PC-9 (cell line): ENCODE measurements at regions of chr12 and their contacts with region 1.

Region 1: DNA sequence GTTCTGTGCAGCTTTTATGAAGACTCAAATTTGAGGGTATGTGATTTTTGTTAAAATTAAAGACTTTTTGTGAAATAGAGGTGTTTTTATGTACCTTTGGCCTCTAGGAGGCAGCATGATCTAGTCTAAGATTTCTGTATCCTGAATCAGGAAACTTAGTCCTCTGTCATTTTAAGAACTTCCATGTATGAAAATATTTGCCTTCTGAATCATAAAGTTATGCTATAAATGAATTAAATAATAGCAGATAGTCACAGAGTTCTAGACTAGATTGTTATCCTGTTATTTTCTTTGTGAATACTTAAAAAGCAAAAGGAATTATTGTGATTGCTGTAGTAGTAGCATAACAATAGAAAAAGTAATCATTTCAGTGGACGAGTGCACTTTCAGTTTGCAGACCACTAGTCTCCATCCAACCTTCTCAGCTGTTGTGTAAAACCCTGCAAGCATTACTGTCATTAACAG is 56.3 kb downstream of the FGD4 start:
- DNase-seq: peak; percentile 22 to 69
- H3K4me3 ChIP-seq: no peak overlapping the region
- H3K27ac ChIP-seq: no peak overlapping the region
- H3K4me1 ChIP-seq: peaks cover 34% of the 10 kb centered on the region
- H3K27me3 ChIP-seq: no peaks in the 10 kb centered on the region
- CTCF ChIP-seq: peak; percentile 83

Region 2: GRCh38 chr12:32437095-32437515 is 18.5 kb before region 1 on chr12:
- CTCF ChIA-PET with region 1: interaction called, 3 read pairs
- POLR2A ChIA-PET with region 1: no interaction called
- intact Hi-C with region 1: loop called (anchors 1 kb)
- DNase-seq: peak; percentile 76 to 97
- H3K4me3 ChIP-seq: peak overlapping the region; percentile 28; the same call in 1 of the 2 replicates
- H3K27ac ChIP-seq: peak overlapping the region; percentile 81
- H3K4me1 ChIP-seq: peaks cover 41% of the 10 kb centered on the region
- H3K27me3 ChIP-seq: no peaks in the 10 kb centered on the region
- CTCF ChIP-seq: no peak

Region 3: GRCh38 chr12:32444895-32445294 is 10.7 kb before region 1 on chr12:
- CTCF ChIA-PET with region 1: no interaction called
- POLR2A ChIA-PET with region 1: no interaction called
- intact Hi-C with region 1: loop called (anchors 1 kb)
- DNase-seq: peak; percentile 73 to 91
- H3K4me3 ChIP-seq: no peak overlapping the region
- H3K27ac ChIP-seq: peak overlapping the region; percentile 57
- H3K4me1 ChIP-seq: peaks cover 64% of the 10 kb centered on the region
- H3K27me3 ChIP-seq: no peaks in the 10 kb centered on the region
- CTCF ChIP-seq: no peak

Region 4: GRCh38 chr12:32586390-32586789 is 130.8 kb after region 1 on chr12:
- CTCF ChIA-PET with region 1: no interaction called
- POLR2A ChIA-PET with region 1: no interaction called
- intact Hi-C with region 1: loop called (anchors 5 kb)
- DNase-seq: no peak
- H3K4me3 ChIP-seq: no peak overlapping the region
- H3K27ac ChIP-seq: no peak overlapping the region
- H3K4me1 ChIP-seq: 0 out of 2 replicates have a peak, but pooled peaks cover 3% of the 10 kb centered on the region
- H3K27me3 ChIP-seq: no peaks in the 10 kb centered on the region
- CTCF ChIP-seq: no peak

Region 5: GRCh38 chr12:32605034-32605719 is 149.5 kb after region 1 on chr12:
- CTCF ChIA-PET with region 1: interaction called, 5 read pairs
- POLR2A ChIA-PET with region 1: interaction called, 3 read pairs
- intact Hi-C with region 1: loop called (anchors 1 kb)
- DNase-seq: peak; percentile 33 to 73
- H3K4me3 ChIP-seq: no peak overlapping the region
- H3K27ac ChIP-seq: peak overlapping the region; percentile 43
- H3K4me1 ChIP-seq: peaks cover 18% of the 10 kb centered on the region
- H3K27me3 ChIP-seq: no peaks in the 10 kb centered on the region
- CTCF ChIP-seq: no peak

Region 6: GRCh38 chr12:32659908-32660440 is 204.3 kb after region 1 on chr12:
- CTCF ChIA-PET with region 1: interaction called, 3 read pairs
- POLR2A ChIA-PET with region 1: no interaction called
- intact Hi-C with region 1: loop called (anchors 1 kb)
- DNase-seq: no peak
- H3K4me3 ChIP-seq: no peak overlapping the region
- H3K27ac ChIP-seq: no peak overlapping the region
- H3K4me1 ChIP-seq: no peaks in the 10 kb centered on the region
- H3K27me3 ChIP-seq: no peaks in the 10 kb centered on the region
- CTCF ChIP-seq: no peak

Region 7: GRCh38 chr12:32737715-32738114 is 282.1 kb after region 1 on chr12:
- CTCF ChIA-PET with region 1: no interaction called
- POLR2A ChIA-PET with region 1: no interaction called
- intact Hi-C with region 1: loop called (anchors 5 kb)
- DNase-seq: no peak
- H3K4me3 ChIP-seq: no peak overlapping the region
- H3K27ac ChIP-seq: no peak overlapping the region
- H3K4me1 ChIP-seq: no peaks in the 10 kb centered on the region
- H3K27me3 ChIP-seq: no peaks in the 10 kb centered on the region
- CTCF ChIP-seq: no peak